IMR-90 (cell line): ENCODE measurements at regions of chr1 and their contacts with region 1.

Region 1: GRCh38 chr1:114207635-114208034 is 54.0 kb upstream of the SYT6 start:
- DNase-seq: no peak
- ATAC-seq: no peak
- H3K4me3 ChIP-seq: no peak overlapping the region
- H3K27ac ChIP-seq: no peak overlapping the region
- H3K4me1 ChIP-seq: no peaks in the 10 kb centered on the region
- H3K27me3 ChIP-seq: peaks cover 7% of the 10 kb centered on the region
- CTCF ChIP-seq: no peak
- POLR2A ChIP-seq: no peak
- RAD21 ChIP-seq: no peak

Region 2: GRCh38 chr1:113675332-113675731 is 532.3 kb before region 1 on chr1:
- CTCF ChIA-PET with region 1: no interaction called
- POLR2A ChIA-PET with region 1: no interaction called
- dilution Hi-C with region 1: no loop called
- in situ Hi-C with region 1: no loop called
- intact Hi-C with region 1: no loop called
- DNase-seq: peak; percentile 19
- ATAC-seq: peak; percentile 41; the same call in 1 of the 2 replicates
- H3K4me3 ChIP-seq: no peak overlapping the region
- H3K27ac ChIP-seq: no peak overlapping the region
- H3K4me1 ChIP-seq: peaks cover 2% of the 10 kb centered on the region; the same call in 1 of the 2 replicates
- H3K27me3 ChIP-seq: no peaks in the 10 kb centered on the region
- CTCF ChIP-seq: no peak
- POLR2A ChIP-seq: no peak
- RAD21 ChIP-seq: no peak

Region 3: GRCh38 chr1:114002492-114003239 is 205.0 kb before region 1 on chr1:
- CTCF ChIA-PET with region 1: no interaction called
- POLR2A ChIA-PET with region 1: no interaction called
- dilution Hi-C with region 1: no loop called
- in situ Hi-C with region 1: no loop called
- intact Hi-C with region 1: no loop called
- DNase-seq: no peak
- ATAC-seq: peak; percentile 97
- H3K4me3 ChIP-seq: no peak overlapping the region
- H3K27ac ChIP-seq: no peak overlapping the region
- H3K4me1 ChIP-seq: peaks cover 4% of the 10 kb centered on the region; the same call in 1 of the 2 replicates
- H3K27me3 ChIP-seq: peaks cover 11% of the 10 kb centered on the region
- CTCF ChIP-seq: no peak
- POLR2A ChIP-seq: no peak
- RAD21 ChIP-seq: no peak

Region 4: DNA sequence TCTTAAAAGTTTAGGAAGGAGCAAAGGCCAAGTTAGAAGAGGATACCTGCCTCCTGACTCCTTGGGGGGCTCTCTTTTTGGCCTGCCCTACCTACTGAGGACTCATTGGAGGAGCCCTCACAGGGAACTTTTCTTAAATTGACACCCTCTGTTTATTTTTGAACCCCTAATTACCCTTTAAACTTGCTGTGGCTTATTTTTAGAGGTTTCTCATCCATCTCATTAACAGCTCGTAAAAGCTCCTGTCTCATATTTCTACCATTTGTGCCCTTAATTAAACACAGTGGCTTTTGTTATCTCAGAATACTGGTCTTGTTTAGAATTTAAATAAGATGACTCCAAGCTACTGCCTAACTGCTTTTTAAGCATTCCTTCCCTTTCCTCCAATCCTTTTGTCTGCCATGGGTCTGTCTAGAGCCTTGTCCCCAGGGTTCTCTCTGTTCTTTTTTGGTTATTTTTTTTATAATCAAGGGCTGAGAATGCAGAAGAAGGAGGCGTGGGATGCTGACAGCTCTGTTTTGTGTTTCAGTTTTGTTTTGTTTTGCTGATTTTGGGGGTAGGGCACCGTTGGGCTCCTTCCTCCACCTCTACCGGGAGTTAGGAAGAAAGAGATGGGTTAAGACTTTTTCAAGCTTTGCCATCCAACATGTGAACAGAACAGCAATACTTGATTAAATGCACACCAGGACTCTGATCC is 131.9 kb before region 1 on chr1:
- CTCF ChIA-PET with region 1: no interaction called
- POLR2A ChIA-PET with region 1: no interaction called
- dilution Hi-C with region 1: no loop called
- in situ Hi-C with region 1: no loop called
- intact Hi-C with region 1: no loop called
- DNase-seq: no peak
- ATAC-seq: no peak
- H3K4me3 ChIP-seq: no peak overlapping the region
- H3K27ac ChIP-seq: no peak overlapping the region
- H3K4me1 ChIP-seq: no peaks in the 10 kb centered on the region
- H3K27me3 ChIP-seq: peaks cover 3% of the 10 kb centered on the region; the same call in 1 of the 2 replicates
- CTCF ChIP-seq: no peak
- POLR2A ChIP-seq: no peak
- RAD21 ChIP-seq: no peak

Region 5: DNA sequence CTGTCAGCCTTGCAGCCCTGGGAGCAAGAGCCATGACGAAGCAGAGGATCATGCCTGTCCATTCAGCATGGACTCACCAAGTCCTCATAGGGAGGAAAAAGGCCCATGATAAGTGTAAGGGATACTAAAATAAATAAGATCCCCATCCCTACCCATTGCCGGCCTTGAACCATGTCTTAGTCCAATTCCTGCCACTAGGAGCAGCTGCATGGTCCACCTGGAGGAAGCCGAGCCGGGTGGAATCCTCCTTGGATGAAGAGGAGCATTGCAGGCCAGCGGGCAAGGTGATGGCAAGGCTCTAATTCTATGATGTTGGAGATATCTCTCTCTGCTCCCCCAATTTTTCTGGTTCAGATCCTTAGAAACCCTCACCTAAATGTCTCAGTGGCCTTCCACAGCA is 15.3 kb before region 1 on chr1:
- CTCF ChIA-PET with region 1: no interaction called
- POLR2A ChIA-PET with region 1: no interaction called
- dilution Hi-C with region 1: no loop called
- in situ Hi-C with region 1: no loop called
- intact Hi-C with region 1: no loop called
- DNase-seq: no peak
- ATAC-seq: no peak
- H3K4me3 ChIP-seq: no peak overlapping the region
- H3K27ac ChIP-seq: no peak overlapping the region
- H3K4me1 ChIP-seq: no peaks in the 10 kb centered on the region
- H3K27me3 ChIP-seq: peaks cover 3% of the 10 kb centered on the region; the same call in 1 of the 2 replicates
- CTCF ChIP-seq: no peak
- POLR2A ChIP-seq: no peak
- RAD21 ChIP-seq: no peak

Region 6: DNA sequence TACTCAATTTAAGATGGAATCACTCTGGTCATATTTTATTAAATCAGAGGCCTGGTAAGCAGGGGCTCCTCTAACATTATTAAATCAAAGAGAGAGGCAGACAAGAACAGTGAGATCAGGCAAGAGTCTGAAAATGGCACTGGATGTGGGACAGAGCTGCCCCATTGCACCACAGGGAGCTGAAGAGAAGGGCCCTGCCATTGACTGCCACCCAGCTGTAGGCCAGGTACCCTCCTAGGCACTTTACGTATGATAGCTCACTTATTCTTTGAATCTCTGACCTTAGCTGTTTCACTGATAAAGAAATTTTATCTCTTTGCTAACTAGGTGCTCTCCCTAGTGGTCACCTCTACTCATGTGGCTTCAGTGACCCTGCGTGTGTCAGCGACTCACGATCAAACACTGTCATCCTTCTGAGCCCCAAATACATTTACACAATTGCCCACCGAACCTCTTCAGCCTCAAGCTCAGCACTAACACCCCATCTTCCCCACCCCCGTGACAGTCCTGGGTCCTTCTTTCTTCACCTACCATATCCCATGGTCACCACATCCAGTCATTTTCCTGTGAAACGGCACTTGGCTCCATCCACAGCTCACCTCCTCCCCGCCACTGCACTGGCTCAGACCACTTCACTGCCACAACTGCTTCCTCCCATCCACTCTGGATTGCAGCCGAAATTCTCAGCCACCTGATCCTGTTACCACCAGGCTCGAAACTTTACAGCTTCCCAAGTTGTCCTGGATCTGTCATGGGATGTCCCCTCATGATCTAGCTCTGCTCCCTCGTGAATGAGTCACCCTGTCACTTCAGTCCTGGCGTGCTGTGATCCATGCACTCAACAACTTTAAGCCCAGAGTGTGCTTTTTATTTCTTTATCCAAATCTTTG is 43.3 kb after region 1 on chr1:
- CTCF ChIA-PET with region 1: no interaction called
- POLR2A ChIA-PET with region 1: no interaction called
- dilution Hi-C with region 1: no loop called
- in situ Hi-C with region 1: no loop called
- intact Hi-C with region 1: loop called (anchors 2 kb)
- DNase-seq: no peak
- ATAC-seq: no peak
- H3K4me3 ChIP-seq: no peak overlapping the region
- H3K27ac ChIP-seq: no peak overlapping the region
- H3K4me1 ChIP-seq: no peaks in the 10 kb centered on the region
- H3K27me3 ChIP-seq: no peaks in the 10 kb centered on the region; the same call in none of the 2 replicates
- CTCF ChIP-seq: no peak
- POLR2A ChIP-seq: no peak
- RAD21 ChIP-seq: no peak